BJ (cell line): ENCODE measurements at regions of chr6 and their contacts with region 1.

Region 1: GRCh38 chr6:42211726-42212125 is 5.9 kb downstream of the MRPS10 start:
- DNase-seq: no peak
- H3K4me3 ChIP-seq: no peak overlapping the region
- H3K27me3 ChIP-seq: no peaks in the 10 kb centered on the region
- CTCF ChIP-seq: no peak

Region 2: GRCh38 chr6:42200035-42200434 is 11.7 kb before region 1 on chr6:
- CTCF ChIA-PET with region 1: interaction called, 42 read pairs
- POLR2A ChIA-PET with region 1: no interaction called
- DNase-seq: peak; percentile 94
- H3K4me3 ChIP-seq: no peak overlapping the region
- H3K27me3 ChIP-seq: no peaks in the 10 kb centered on the region
- CTCF ChIP-seq: no peak